Activated CD8-positive, alpha-beta T cell treated with anti-CD3 and anti-CD28 coated beads for 36 hours (primary cell): ENCODE measurements at regions of chrX and their contacts with region 1.

Region 1: DNA sequence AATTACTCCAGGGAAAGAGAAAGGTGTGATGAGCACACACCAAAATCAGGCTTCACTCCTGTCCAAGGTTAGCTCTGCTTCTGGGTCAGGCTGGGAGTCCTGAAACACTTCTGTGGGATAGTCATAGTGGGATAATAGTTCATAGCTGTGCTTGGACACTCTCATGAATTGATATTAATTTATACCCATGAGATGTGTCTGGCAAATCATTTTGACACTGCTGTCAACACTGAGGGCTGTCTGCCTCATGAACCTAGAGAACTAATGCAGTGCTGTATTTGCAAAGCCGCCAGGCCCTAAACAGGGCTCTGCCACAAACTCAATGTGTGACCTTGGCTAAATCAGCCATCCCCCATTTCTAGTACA is 24.5 kb upstream of the PGRMC1 start:
- DNase-seq: no peak
- ATAC-seq: no peak
- H3K4me3 Mint-ChIP-seq: no peak overlapping the region
- H3K27ac Mint-ChIP-seq: no peak overlapping the region
- H3K4me1 Mint-ChIP-seq: no peaks in the 10 kb centered on the region
- H3K27me3 Mint-ChIP-seq: peaks cover 4% of the 10 kb centered on the region
- CTCF ChIP-seq: no peak

Region 2: GRCh38 chrX:119130911-119131310 is 80.7 kb before region 1 on chrX:
- CTCF ChIA-PET with region 1: no interaction called
- POLR2A ChIA-PET with region 1: no interaction called
- intact Hi-C with region 1: loop called (anchors 10 kb)
- DNase-seq: no peak
- ATAC-seq: no peak
- H3K4me3 Mint-ChIP-seq: no peak overlapping the region
- H3K27ac Mint-ChIP-seq: no peak overlapping the region
- H3K4me1 Mint-ChIP-seq: no peaks in the 10 kb centered on the region
- H3K27me3 Mint-ChIP-seq: peaks cover 3% of the 10 kb centered on the region
- CTCF ChIP-seq: no peak

Region 3: DNA sequence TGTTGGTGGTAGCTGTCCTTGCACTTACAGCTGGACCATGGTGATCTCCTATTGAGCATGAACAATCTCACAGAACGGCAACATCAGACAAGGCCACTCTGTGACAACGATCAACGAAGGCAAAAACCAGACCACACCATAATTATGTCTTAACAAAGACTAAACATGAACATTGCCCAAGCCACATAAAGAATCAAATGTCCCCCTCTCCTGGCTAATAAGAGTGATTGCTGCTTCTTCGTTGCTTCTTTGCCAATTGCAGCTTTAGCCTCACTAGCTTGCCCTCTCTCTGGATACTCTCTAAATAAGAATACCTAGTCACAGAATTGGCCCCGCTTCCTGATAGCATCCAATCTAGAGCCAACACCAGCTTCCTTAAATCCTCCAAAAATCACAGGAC is 17.0 kb before region 1 on chrX:
- CTCF ChIA-PET with region 1: no interaction called
- POLR2A ChIA-PET with region 1: no interaction called
- intact Hi-C with region 1: no loop called
- DNase-seq: no peak
- ATAC-seq: no peak
- H3K4me3 Mint-ChIP-seq: no peak overlapping the region
- H3K27ac Mint-ChIP-seq: no peak overlapping the region
- H3K4me1 Mint-ChIP-seq: no peaks in the 10 kb centered on the region
- H3K27me3 Mint-ChIP-seq: no peaks in the 10 kb centered on the region
- CTCF ChIP-seq: no peak

Region 4: DNA sequence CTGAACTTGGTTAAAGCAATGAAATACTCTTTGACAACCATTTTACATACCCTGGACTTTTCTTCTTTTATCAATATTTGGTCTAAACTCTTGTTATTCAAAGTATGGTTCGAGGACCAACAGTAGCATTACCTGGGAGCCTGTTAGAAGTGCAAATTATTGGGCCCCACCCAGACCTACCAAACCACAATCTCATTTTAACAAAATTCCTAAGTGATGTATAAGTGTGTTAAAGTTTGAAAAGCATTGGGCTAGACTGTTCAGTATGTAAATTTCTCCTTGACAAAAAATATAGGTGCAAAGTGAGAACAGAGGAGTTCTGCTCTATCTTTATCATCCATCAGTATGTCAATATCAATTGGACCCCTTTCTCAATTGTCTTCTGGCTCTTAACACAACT is 91.5 kb after region 1 on chrX:
- CTCF ChIA-PET with region 1: no interaction called
- POLR2A ChIA-PET with region 1: no interaction called
- intact Hi-C with region 1: no loop called
- DNase-seq: no peak
- ATAC-seq: no peak
- H3K4me3 Mint-ChIP-seq: no peak overlapping the region
- H3K27ac Mint-ChIP-seq: no peak overlapping the region
- H3K4me1 Mint-ChIP-seq: peaks cover 3% of the 10 kb centered on the region
- H3K27me3 Mint-ChIP-seq: no peaks in the 10 kb centered on the region
- CTCF ChIP-seq: no peak